ENCODE measurements at regions of chr5 and their contacts with region 1.

Region 1: GRCh38 chr5:112146323-112147226 is 272.5 kb downstream of the EPB41L4A start:
- DNase-seq: peak; percentile 86
- H3K4me3 Mint-ChIP-seq: no peak overlapping the region
- H3K27ac Mint-ChIP-seq: no peak overlapping the region
- H3K4me1 Mint-ChIP-seq: no peaks in the 10 kb centered on the region
- H3K27me3 Mint-ChIP-seq: peaks cover 11% of the 10 kb centered on the region

Region 2: DNA sequence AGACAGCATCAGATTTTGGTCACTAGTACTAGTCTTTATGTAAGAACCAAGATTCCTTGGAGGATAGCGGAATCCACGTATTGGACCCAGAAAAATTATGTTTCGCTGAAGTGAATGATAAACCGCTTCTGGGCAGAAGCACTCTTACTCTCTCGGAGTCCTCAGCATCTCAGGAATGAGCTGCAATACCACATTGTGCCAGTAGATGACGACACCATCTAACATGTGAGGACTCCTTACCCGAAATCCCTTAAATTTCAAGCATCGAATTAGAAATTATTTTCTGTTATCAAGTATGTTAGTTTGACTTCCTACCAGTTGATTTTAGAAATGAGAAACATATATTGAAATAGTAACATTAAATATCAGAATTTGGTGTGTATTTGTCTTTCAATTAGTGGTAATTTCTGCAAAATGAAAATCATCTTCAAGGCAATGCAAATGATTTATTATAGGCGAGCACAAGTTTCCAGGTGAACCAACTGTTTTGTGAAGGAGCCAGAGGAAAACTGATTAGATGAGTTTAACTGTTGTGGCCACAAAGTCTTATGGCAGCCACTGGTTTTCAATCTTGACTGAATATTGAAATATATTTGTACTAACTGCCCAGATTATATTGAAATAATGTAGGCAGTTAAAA is 988.4 kb before region 1 on chr5:
- intact Hi-C with region 1: loop called (anchors 2 kb)
- DNase-seq: peak; percentile 94
- H3K4me3 Mint-ChIP-seq: no peak overlapping the region
- H3K27ac Mint-ChIP-seq: no peak overlapping the region
- H3K4me1 Mint-ChIP-seq: peaks cover 2% of the 10 kb centered on the region
- H3K27me3 Mint-ChIP-seq: peaks cover 3% of the 10 kb centered on the region

Region 3: GRCh38 chr5:111278845-111279504 is 867.6 kb before region 1 on chr5:
- intact Hi-C with region 1: loop called (anchors 2 kb)
- DNase-seq: peak; percentile 95
- H3K4me3 Mint-ChIP-seq: no peak overlapping the region
- H3K27ac Mint-ChIP-seq: no peak overlapping the region
- H3K4me1 Mint-ChIP-seq: peaks cover 24% of the 10 kb centered on the region
- H3K27me3 Mint-ChIP-seq: no peaks in the 10 kb centered on the region

Region 4: GRCh38 chr5:111530298-111530740 is 616.3 kb before region 1 on chr5:
- intact Hi-C with region 1: loop called (anchors 5 kb)
- DNase-seq: peak; percentile 95
- H3K4me3 Mint-ChIP-seq: peak overlapping the region; percentile 58
- H3K27ac Mint-ChIP-seq: peak overlapping the region; percentile 84
- H3K4me1 Mint-ChIP-seq: peaks cover 28% of the 10 kb centered on the region
- H3K27me3 Mint-ChIP-seq: no peaks in the 10 kb centered on the region

Region 5: GRCh38 chr5:111550279-111551020 is 596.1 kb before region 1 on chr5:
- intact Hi-C with region 1: loop called (anchors 1 kb)
- DNase-seq: peak; percentile 93
- H3K4me3 Mint-ChIP-seq: peak overlapping the region; percentile 20
- H3K27ac Mint-ChIP-seq: peak overlapping the region; percentile 72
- H3K4me1 Mint-ChIP-seq: peaks cover 36% of the 10 kb centered on the region
- H3K27me3 Mint-ChIP-seq: peaks cover 4% of the 10 kb centered on the region

Region 6: DNA sequence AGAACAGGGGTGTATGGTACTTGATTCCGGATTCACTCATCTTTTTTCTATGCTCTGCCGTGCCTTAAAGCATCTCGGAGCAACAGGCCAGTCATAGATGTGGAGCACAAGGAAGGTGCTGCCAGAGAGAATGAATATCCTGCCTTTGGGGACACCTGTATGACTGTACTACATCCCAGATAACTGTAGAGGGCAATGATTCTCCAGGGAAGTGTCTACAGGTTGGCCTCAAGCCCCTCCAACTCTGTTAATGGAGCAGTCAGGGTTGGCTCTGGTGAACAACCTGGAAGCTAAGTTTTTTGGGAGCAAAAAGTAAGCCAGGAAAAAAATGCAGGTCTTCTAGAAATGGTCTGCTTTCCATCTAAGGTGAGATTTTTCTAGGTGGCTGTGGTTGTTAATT is 460.6 kb before region 1 on chr5:
- intact Hi-C with region 1: loop called (anchors 5 kb)
- DNase-seq: no peak
- H3K4me3 Mint-ChIP-seq: no peak overlapping the region
- H3K27ac Mint-ChIP-seq: no peak overlapping the region
- H3K4me1 Mint-ChIP-seq: no peaks in the 10 kb centered on the region
- H3K27me3 Mint-ChIP-seq: no peaks in the 10 kb centered on the region

Region 7: DNA sequence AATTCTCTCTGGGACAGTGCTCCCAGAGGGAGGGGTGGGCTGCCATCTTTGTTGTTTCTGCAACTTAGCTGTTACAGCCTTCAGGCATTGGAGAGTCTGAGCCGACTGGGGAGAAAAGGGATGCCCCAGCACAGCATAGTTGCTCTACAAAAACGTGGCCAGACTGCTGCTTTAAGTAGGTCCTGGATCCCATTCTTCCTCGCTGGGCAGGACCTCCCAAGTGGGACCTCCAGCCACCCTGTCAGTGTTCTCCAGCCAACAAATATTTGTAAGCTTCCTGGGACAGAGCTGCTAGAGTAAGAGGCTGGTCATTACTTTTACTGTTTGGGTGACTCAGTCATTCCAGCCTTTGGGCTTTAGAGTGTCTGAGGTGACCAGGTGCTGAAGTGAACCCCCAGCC is 96.8 kb before region 1 on chr5:
- intact Hi-C with region 1: no loop called
- DNase-seq: no peak
- H3K4me3 Mint-ChIP-seq: no peak overlapping the region
- H3K27ac Mint-ChIP-seq: no peak overlapping the region
- H3K4me1 Mint-ChIP-seq: no peaks in the 10 kb centered on the region
- H3K27me3 Mint-ChIP-seq: peaks cover 2% of the 10 kb centered on the region

Measured in activated CD4-positive, alpha-beta T cell treated with anti-CD3 and anti-CD28 coated beads, Interleukin-2, amount 10 ng/mL, durations not matched to agents 24 days and 14 days (primary cell).